Activated CD4-positive, alpha-beta T cell treated with anti-CD3 and anti-CD28 coated beads, Interleukin-2, amount 10 ng/mL, durations not matched to agents 7 days and 5 days (primary cell): ENCODE measurements at regions of chr1 and their contacts with region 1.

Region 1: DNA sequence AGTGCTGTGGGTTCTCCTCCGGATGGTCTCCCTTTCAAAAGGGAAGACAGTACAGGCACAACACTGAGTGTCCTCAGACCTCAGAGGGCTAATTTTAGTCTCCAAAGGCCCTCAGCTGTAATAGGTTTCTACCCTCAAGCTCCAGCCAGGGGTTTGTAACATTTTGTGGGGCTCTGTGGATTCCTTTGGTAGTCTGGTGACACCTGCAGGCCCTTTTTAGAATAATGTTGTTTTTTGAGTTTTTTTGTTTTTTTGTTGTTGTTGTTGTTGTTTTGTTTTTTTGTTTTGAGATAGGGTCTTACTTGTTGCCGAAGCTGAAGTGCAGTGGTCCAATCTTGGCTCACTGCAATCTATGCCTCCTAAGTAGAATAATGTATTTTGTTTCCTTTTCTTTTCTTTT is 15.0 kb upstream of the TMEM201 start:
- DNase-seq: no peak
- H3K4me3 Mint-ChIP-seq: no peak overlapping the region
- H3K27ac Mint-ChIP-seq: no peak overlapping the region
- H3K4me1 Mint-ChIP-seq: no peaks in the 10 kb centered on the region
- H3K27me3 Mint-ChIP-seq: no peaks in the 10 kb centered on the region

Region 2: DNA sequence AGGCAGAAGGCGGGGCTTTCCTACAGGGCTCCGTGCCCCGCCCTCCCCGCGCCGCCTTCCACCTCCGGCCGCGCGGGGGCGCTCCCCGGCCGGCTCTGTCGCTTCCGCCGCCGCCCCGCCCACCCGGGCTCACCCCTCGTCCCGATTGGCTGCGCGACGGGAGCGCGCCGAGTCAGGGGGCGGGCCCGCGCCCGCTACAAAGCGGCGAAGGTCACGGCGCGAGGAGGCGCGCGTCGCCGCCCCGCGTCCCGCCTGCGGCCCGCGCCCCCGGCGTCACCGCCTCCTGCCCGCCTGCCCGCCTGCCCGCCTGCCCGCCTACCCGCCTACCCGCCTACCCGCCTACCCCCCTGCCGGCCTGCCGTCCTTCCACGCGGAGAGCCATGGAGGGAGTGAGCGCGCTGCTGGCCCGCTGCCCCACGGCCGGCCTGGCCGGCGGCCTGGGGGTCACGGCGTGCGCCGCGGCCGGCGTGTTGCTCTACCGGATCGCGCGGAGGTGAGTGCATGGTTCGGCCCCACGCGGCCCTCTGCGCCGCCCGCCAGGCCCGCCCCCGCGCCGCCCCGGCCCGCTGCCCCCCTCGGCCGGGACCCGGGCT is 14.9 kb after region 1 on chr1 and contains the start of gene TMEM201:
- CTCF ChIA-PET with region 1: interaction called, 10 read pairs
- POLR2A ChIA-PET with region 1: interaction called, 6 read pairs
- DNase-seq: peak; percentile 92
- H3K4me3 Mint-ChIP-seq: peak within 1 kb of the TSS; percentile 79
- H3K27ac Mint-ChIP-seq: peak within 1 kb of the TSS; percentile 84
- H3K4me1 Mint-ChIP-seq: peaks cover 40% of the 10 kb centered on the region
- H3K27me3 Mint-ChIP-seq: no peaks in the 10 kb centered on the region
- total RNA-seq, gene TMEM201: 17.1 to 17.9 TPM

Region 3: DNA sequence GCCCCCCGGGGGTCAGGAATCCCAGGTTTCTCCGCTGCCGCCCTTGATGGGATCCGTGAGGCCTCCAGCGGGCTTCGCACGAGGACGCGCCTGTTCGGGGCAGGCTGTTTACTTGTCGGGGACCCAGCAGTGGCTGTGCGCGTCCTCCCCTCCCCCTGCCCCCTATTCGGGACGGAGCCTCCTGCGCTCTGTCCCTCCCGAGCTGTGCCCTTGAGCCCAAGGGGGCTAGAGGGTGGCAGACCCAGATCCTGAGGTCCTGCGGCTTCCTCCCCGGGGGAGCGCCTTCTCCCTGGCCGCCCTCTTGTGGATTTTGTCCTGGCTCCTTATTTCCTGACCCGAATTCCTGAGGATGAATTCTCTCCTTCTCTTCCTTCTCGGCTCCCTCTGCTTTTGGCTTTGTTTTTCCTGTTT is 116.3 kb after region 1 on chr1:
- CTCF ChIA-PET with region 1: no interaction called
- POLR2A ChIA-PET with region 1: no interaction called
- DNase-seq: peak; percentile 24
- H3K4me3 Mint-ChIP-seq: peak overlapping the region; percentile 84
- H3K27ac Mint-ChIP-seq: peak overlapping the region; percentile 86
- H3K4me1 Mint-ChIP-seq: peaks cover 73% of the 10 kb centered on the region
- H3K27me3 Mint-ChIP-seq: no peaks in the 10 kb centered on the region